Heart right ventricle (tissue), 16 donors: ENCODE measurements at regions of chr13 and their contacts with region 1.

Region 1: GRCh38 chr13:48492470-48493065 is 40.3 kb downstream of the RCBTB2 start:
- DNase-seq: peak; percentile 79 to 88
- ATAC-seq: peak; percentile 90 to 95 (median 93)
- H3K4me3 ChIP-seq: peak overlapping the region in 9 of 10 donors; percentile 12 to 51 (median 38)
- H3K27ac ChIP-seq: peak overlapping the region; percentile 24 to 90 (median 74)
- H3K4me1 ChIP-seq: peaks cover 0 to 80% (median 37%) of the 10 kb centered on the region in 9 donors
- H3K27me3 ChIP-seq: no peaks in the 10 kb centered on the region
- CTCF ChIP-seq: no peak

Region 2: DNA sequence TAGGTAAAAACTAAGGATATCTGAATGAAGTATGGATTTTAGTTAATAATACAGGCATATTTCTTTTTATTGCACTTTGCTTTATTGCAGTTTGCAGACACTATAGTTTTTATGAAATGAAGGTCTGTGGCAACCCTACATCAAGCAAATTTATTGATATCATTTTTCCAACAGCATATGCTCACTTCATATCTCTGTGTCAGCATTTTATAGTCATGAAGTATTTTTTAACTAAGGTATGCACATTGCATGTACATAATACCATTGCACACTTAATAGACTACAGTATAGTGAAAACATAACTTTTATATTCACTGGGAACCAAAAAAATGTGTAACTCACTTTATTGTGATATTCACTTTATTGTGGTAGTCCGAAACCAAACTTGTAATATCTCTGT is 727.8 kb before region 1 on chr13:
- intact Hi-C with region 1: no loop called
- DNase-seq: no peak
- ATAC-seq: no peak
- H3K4me3 ChIP-seq: no peak overlapping the region
- H3K27ac ChIP-seq: no peak overlapping the region
- H3K4me1 ChIP-seq: no peaks in the 10 kb centered on the region
- H3K27me3 ChIP-seq: no peaks in the 10 kb centered on the region
- CTCF ChIP-seq: no peak

Region 3: GRCh38 chr13:48412881-48413351 is 79.7 kb before region 1 on chr13 and contains the start of gene LPAR6:
- intact Hi-C with region 1: loop called in 3 of 10 experiments (anchors 2 to 10 kb)
- DNase-seq: peak in 1 of 2 donors; percentile 54
- ATAC-seq: peak; percentile 64 to 94 (median 88)
- H3K4me3 ChIP-seq: peak within 1 kb of the TSS; percentile 22 to 69 (median 61)
- H3K27ac ChIP-seq: peak within 1 kb of the TSS; percentile 5 to 93 (median 80)
- H3K4me1 ChIP-seq: peaks cover 0 to 38% (median 24%) of the 10 kb centered on the region in 9 donors
- H3K27me3 ChIP-seq: no peaks in the 10 kb centered on the region
- CTCF ChIP-seq: no peak
- total RNA-seq, gene LPAR6: 5.0 to 28.7 (median 12.1) TPM

Region 4: GRCh38 chr13:48429886-48430285 is 62.7 kb before region 1 on chr13:
- intact Hi-C with region 1: loop called in 2 of 10 experiments (anchors 10 kb)
- DNase-seq: no peak
- ATAC-seq: no peak
- H3K4me3 ChIP-seq: no peak overlapping the region
- H3K27ac ChIP-seq: peak overlapping the region in 1 of 10 donors; percentile 29
- H3K4me1 ChIP-seq: peaks cover 11 to 63% (median 33%) of the 10 kb centered on the region in 9 donors
- H3K27me3 ChIP-seq: no peaks in the 10 kb centered on the region
- CTCF ChIP-seq: no peak

Region 5: GRCh38 chr13:48437371-48437770 is 55.2 kb before region 1 on chr13:
- intact Hi-C with region 1: loop called in 1 of 10 experiments (anchors 10 kb)
- DNase-seq: peak; percentile 73 to 83
- ATAC-seq: peak; percentile 76 to 97 (median 92)
- H3K4me3 ChIP-seq: peak overlapping the region in 2 of 10 donors; percentile 0 to 7
- H3K27ac ChIP-seq: peak overlapping the region in 8 of 10 donors; percentile 31 to 81 (median 50)
- H3K4me1 ChIP-seq: peaks cover 1 to 57% (median 34%) of the 10 kb centered on the region in 9 donors
- H3K27me3 ChIP-seq: no peaks in the 10 kb centered on the region
- CTCF ChIP-seq: no peak

Region 6: GRCh38 chr13:48448959-48449614 is 43.5 kb before region 1 on chr13:
- intact Hi-C with region 1: loop called in 1 of 10 experiments (anchors 5 kb)
- DNase-seq: no peak
- ATAC-seq: peak in 2 of 8 donors; percentile 47 to 59
- H3K4me3 ChIP-seq: peak overlapping the region in 6 of 10 donors; percentile 5 to 21 (median 10)
- H3K27ac ChIP-seq: peak overlapping the region in 7 of 10 donors; percentile 7 to 69 (median 30)
- H3K4me1 ChIP-seq: peaks cover 0 to 46% (median 12%) of the 10 kb centered on the region in 9 donors
- H3K27me3 ChIP-seq: no peaks in the 10 kb centered on the region
- CTCF ChIP-seq: no peak

Region 7: DNA sequence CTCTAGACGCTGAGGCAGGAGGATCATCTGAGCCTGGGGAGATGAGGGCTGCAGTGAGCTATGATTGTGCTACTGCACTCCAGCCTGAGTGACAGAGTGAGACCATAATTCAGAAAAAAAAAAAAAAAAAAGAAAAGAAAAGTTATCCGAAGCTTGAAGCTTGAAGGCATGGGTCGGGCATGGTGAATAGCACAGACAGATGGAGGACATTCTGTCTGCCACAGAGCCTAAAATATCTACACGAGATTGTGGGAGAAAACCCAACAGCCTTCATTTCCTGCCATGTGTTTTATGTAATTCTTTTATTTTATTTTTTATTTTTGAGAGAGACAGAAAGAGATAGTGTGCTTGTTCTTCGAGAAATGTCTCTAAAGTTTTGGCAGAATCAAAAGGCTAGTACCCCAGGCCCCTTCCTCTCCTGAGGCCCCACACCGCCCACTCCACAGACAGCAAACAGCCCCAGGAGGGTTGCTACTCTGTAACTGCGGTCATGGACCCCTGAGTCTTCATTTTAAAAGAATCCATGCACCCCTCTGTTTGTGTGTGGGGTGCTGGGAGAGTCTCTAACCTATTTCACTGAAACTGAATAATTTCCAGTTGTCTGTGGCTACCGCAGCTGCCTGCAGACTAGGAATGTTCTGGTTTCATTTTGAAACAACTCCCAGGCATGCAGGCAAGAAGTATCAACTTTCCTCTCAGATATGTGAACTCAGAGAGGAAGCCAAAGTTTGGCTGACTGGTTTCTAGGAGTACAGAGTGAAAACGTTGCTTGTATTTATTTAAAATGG is 78.8 kb after region 1 on chr13:
- intact Hi-C with region 1: loop called in 2 of 10 experiments (anchors 5 to 10 kb)
- DNase-seq: peak in 1 of 2 donors; percentile 59
- ATAC-seq: peak; percentile 40 to 82 (median 70)
- H3K4me3 ChIP-seq: peak overlapping the region in 7 of 10 donors; percentile 23 to 46 (median 30)
- H3K27ac ChIP-seq: peak overlapping the region; percentile 60 to 92 (median 83)
- H3K4me1 ChIP-seq: peaks cover 0 to 88% (median 72%) of the 10 kb centered on the region in 9 donors
- H3K27me3 ChIP-seq: no peaks in the 10 kb centered on the region
- CTCF ChIP-seq: no peak